Activated T-helper 2 cell treated with anti-CD3 and anti-CD28 coated beads, Interferon-gamma antibody, Interleukin-2, Interleukin-4, amounts not matched to agents 10 μg/mL and 5 μg/mL and 100 μg/mL, durations not matched to agents 14 hours and 24 hours and 36 hours (primary cell): ENCODE measurements at regions of chr20 and their contacts with region 1.

Region 1: GRCh38 chr20:49534255-49534712 is 33.7 kb downstream of the PTGIS start:
- DNase-seq: peak; percentile 56
- H3K4me3 Mint-ChIP-seq: peak overlapping the region; percentile 6
- H3K27ac Mint-ChIP-seq: peak overlapping the region; percentile 83
- H3K4me1 Mint-ChIP-seq: peaks cover 26% of the 10 kb centered on the region
- H3K27me3 Mint-ChIP-seq: peaks cover 3% of the 10 kb centered on the region

Region 2: GRCh38 chr20:49338061-49338460 is 196.2 kb before region 1 on chr20:
- intact Hi-C with region 1: loop called (anchors 1 kb)
- DNase-seq: no peak
- H3K4me3 Mint-ChIP-seq: no peak overlapping the region
- H3K27ac Mint-ChIP-seq: no peak overlapping the region
- H3K4me1 Mint-ChIP-seq: peaks cover 3% of the 10 kb centered on the region
- H3K27me3 Mint-ChIP-seq: peaks cover 11% of the 10 kb centered on the region

Region 3: DNA sequence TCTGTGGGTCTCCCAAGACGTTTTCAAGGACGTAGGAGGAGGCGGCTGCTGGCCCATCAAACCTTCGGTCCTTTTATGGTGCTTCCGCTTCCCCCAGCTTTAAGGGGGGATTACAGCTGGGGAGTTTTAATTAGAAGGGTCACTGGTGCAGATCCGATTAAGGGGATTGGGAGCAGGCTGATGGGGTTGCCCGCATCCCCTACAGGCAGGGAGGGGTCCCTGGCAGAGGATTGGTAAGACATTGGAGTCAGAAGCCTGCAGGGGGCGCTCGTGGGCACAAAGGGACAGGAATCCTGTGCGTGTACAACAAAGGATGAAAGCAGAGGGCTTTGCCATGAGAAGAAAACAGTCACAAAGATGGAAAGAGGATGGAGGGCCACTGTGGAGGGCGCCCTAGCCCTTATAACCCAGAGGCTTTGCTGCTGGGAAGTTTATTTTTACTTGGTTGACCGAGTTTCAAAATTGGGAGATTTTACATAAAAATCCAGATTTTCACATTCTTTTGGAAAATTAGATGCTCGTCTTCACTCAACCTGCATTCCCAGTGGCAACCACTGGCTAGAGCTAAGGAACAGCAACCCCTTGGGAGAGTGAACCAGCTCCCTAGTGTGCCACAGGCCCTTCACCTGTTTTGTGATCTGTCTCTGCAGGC is 149.7 kb before region 1 on chr20:
- intact Hi-C with region 1: loop called (anchors 1 kb)
- DNase-seq: peak; percentile 55
- H3K4me3 Mint-ChIP-seq: no peak overlapping the region
- H3K27ac Mint-ChIP-seq: no peak overlapping the region
- H3K4me1 Mint-ChIP-seq: no peaks in the 10 kb centered on the region
- H3K27me3 Mint-ChIP-seq: peaks cover 23% of the 10 kb centered on the region

Region 4: GRCh38 chr20:49602345-49603208 is 68.3 kb after region 1 on chr20:
- intact Hi-C with region 1: no loop called
- DNase-seq: no peak
- H3K4me3 Mint-ChIP-seq: no peak overlapping the region
- H3K27ac Mint-ChIP-seq: peak overlapping the region; percentile 52
- H3K4me1 Mint-ChIP-seq: peaks cover 39% of the 10 kb centered on the region
- H3K27me3 Mint-ChIP-seq: no peaks in the 10 kb centered on the region